Stomach (tissue), 19 donors: ENCODE measurements at regions of chr6 and their contacts with region 1.

Region 1: DNA sequence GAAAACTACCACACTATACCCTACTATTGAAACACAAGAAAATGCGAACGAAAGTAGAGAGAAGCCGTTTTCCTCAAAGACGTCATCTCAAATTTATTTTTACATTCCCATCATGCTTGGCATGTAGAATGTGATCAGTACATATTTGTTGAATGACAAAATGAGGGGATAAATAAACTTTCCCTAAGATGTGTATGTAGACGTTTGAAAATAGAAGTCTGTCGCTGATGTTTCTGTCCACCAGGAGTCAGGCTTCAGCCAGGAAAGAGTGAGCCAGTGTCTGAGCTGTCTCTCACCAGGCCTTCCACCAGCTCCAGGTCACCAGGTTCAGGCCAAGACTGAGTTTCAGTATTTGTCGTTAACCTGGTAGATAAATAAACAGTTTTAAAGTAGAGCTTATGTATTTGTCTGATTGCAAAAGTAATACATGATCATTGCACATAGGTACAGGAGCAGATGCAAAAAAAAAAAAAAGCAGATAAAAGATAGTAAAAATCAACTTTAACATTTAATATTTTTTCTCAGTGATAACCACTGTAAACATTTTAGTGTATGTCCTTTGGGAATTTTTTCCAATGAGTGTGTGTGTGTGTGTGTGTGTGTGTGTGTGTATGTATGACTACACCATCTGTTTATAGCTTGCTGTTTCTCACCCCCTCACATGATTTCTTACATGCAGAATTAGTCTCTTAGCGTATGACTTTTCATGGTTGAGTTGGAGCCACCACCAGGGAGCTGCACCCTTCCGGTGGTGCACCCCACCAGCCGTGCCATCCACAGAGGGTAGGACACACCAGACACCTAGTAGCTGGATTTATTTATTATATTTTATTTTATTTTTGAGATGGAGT is 26.2 kb downstream of the WRNIP1 start:
- DNase-seq: peak; percentile 76 to 91
- H3K4me3 ChIP-seq: peak overlapping the region in 1 of 4 donors; percentile 9
- H3K27ac ChIP-seq: peak overlapping the region in 4 of 5 donors; percentile 74 to 86 (median 80)
- H3K4me1 ChIP-seq: peaks cover 0 to 58% (median 30%) of the 10 kb centered on the region in 4 donors
- H3K27me3 ChIP-seq: no peaks in the 10 kb centered on the region
- CTCF ChIP-seq: peak in 5 of 7 experiments; percentile 55 to 95 (median 72)
- EP300 ChIP-seq: no peak
- POLR2A ChIP-seq: no peak

Region 2: DNA sequence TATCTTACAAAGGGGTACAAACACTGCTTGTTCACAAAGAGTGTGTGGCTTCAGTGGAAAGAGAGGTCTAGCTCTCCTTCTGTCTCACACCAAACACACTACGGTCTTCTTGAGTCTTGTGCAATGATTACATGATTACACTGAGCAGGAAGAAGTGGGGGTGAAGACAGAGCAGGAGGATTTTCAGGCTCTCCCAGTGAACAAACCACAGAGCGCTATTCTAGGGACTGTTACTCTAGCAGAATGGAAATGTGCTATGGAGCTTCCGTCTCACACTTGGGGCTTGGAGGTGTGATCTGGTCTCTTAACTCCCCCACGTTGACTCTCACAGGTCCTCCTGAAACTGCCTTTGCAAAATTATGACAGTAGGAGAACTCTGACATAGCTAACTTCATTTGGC is 244.0 kb before region 1 on chr6:
- intact Hi-C with region 1: no loop called
- DNase-seq: no peak
- H3K4me3 ChIP-seq: no peak overlapping the region
- H3K27ac ChIP-seq: no peak overlapping the region
- H3K4me1 ChIP-seq: peaks cover 0 to 9% (median 6%) of the 10 kb centered on the region in 4 donors
- H3K27me3 ChIP-seq: no peaks in the 10 kb centered on the region
- CTCF ChIP-seq: no peak
- EP300 ChIP-seq: no peak
- POLR2A ChIP-seq: no peak

Region 3: GRCh38 chr6:2841264-2842138 is 50.2 kb after region 1 on chr6 and contains the start of gene SERPINB1:
- intact Hi-C with region 1: loop called (anchors 10 kb)
- DNase-seq: peak; percentile 94 to 95
- H3K4me3 ChIP-seq: peak within 1 kb of the TSS; percentile 57 to 71 (median 60)
- H3K27ac ChIP-seq: peak within 1 kb of the TSS; percentile 92 to 100 (median 96)
- H3K4me1 ChIP-seq: peaks cover 41 to 82% (median 59%) of the 10 kb centered on the region in 4 donors
- H3K27me3 ChIP-seq: no peaks in the 10 kb centered on the region
- CTCF ChIP-seq: peak in 2 of 7 experiments; percentile 10 to 11
- EP300 ChIP-seq: peak; percentile 86
- POLR2A ChIP-seq: peak in 1 of 4 donors; percentile 63
- total RNA-seq, gene SERPINB1: 10.3 to 122 (median 18.7) TPM

Region 4: GRCh38 chr6:2931055-2931454 is 139.7 kb after region 1 on chr6:
- intact Hi-C with region 1: no loop called
- DNase-seq: peak in 1 of 2 donors; percentile 5
- H3K4me3 ChIP-seq: no peak overlapping the region
- H3K27ac ChIP-seq: no peak overlapping the region
- H3K4me1 ChIP-seq: peaks cover 4 to 8% (median 7%) of the 10 kb centered on the region in 4 donors
- H3K27me3 ChIP-seq: no peaks in the 10 kb centered on the region
- CTCF ChIP-seq: no peak
- EP300 ChIP-seq: no peak
- POLR2A ChIP-seq: no peak